Activated CD4-positive, alpha-beta T cell treated with anti-CD3 and anti-CD28 coated beads for 36 hours (primary cell): ENCODE measurements at regions of chr19 and their contacts with region 1.

Region 1: DNA sequence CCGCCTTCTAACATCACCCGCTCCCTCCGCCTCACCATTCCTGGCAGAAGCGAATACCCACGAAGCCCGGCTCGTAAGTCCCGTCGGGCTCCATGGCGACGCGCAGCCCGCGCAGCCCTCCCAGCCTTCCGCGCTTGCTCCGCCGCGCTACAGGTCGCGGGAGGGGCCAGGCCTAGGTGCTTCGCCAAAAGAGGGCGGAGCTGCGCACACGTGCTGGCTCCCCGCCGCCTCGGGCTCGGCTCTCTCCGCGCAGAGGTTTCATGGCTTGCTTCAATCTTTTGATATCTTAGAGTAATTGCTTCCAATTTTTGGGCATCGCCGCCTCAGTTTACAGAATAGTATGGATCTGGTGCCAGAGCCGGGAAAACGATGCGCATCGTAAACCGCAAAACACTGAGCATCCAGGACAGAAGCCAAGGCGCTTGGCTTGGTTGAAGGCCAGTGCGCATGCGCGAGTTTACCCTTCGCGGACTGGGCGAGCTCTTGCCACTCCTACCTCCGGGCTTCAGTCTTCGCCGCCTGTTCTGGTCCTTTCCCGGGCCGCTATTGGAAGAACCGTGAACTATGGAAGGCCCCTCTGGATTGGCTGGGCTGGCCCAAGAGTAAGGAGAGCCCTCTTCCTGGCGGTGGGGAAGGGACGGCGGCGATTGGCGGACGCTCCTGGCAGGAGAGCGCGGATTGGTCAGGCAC is at the start of gene POLR2I:
- DNase-seq: peak; percentile 99
- ATAC-seq: peak; percentile 95
- H3K4me3 Mint-ChIP-seq: peak within 1 kb of the TSS; percentile 98
- H3K27ac Mint-ChIP-seq: peak within 1 kb of the TSS; percentile 93
- H3K4me1 Mint-ChIP-seq: peaks cover 29% of the 10 kb centered on the region
- H3K27me3 Mint-ChIP-seq: no peaks in the 10 kb centered on the region
- total RNA-seq, gene POLR2I: 89.6 to 97.3 TPM

Region 2: DNA sequence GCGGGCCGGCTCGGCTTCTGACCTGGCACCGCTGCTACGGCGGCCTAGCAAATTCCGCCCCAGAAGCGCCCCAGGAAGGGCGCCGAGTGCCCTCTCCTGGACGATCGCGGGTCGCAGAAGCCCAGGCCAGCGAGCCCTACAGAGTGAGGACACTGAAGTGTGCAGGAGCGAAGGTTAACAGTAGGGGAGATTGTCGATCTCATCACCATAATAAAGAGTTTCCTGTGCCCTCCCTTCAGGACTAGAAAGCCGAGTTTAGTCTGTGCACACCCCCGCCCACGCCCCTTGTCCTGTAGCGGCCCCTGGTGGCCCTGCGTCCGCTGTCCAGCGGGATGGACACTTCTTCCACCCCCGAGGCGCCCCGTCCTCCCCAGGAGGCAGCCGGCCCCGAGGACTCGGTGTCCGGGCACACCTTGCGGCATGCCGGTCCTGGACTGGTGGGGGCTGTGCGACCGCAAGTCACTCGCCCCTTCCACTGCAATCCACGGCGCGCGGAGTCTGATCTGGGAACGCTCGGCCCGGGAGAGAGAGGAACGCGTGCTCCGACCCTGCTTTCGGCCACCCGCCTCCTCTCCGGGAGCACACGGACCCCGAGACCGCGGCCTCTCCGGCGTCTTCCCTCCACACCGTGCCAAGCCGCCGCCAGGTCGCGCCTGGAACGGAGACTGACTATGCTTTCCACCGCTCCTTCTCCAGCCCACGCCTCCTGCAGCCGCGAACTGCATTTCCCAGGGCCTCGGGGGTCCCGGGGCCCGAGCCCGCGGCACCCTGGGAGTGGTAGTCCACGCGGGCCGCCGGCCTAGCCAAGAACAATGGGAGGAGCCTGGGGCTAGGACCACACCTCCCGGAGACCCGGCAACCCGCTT is 397.9 kb before region 1 on chr19:
- CTCF ChIA-PET with region 1: no interaction called
- POLR2A ChIA-PET with region 1: no interaction called
- intact Hi-C with region 1: loop called (anchors 1 to 10 kb)
- DNase-seq: peak; percentile 98
- ATAC-seq: peak; percentile 61
- H3K4me3 Mint-ChIP-seq: peak overlapping the region; percentile 97
- H3K27ac Mint-ChIP-seq: peak overlapping the region; percentile 90
- H3K4me1 Mint-ChIP-seq: peaks cover 41% of the 10 kb centered on the region
- H3K27me3 Mint-ChIP-seq: no peaks in the 10 kb centered on the region

Region 3: DNA sequence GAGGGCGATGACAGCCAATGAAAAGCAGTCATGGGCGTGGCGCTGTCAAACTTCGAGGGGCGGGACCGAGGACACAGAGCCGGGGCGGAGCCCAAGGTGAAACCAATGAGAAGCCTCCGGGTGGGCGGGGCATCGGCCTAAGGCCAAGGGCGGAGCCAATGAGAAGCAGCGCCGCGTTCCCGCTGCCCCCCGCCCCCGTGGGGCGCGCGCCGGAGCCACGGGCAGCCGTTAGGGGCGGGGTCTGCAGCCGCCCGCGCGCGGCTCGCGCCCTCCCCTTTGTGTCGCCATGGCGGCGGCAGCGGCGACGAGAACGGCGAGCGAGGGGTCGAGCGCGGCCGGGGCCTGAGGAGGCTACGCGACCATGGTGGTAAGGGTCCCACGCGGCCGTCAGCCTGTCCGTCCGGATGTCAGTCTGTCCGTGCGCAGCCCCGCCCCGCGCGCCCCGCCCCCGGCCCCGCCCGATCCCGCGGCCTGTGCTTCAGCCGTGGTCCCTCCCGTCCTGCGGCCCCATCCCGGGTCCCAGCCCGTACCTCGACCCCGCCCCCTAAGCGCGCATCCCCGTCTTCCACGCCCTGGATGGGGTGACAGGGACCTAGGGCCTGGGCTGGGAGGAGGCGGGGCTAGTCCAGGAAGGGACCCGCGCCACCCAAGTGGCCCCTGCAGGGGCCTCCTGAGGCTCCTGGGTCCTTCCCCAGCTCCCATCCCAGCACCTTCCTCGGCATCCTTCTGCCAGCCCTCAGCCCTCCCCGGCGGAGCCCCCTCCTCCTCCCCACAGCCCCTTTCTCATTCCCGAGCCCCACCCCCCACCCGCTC is 339.4 kb before region 1 on chr19 and contains the start of gene ARHGAP33:
- CTCF ChIA-PET with region 1: no interaction called
- POLR2A ChIA-PET with region 1: no interaction called
- intact Hi-C with region 1: loop called in 1 of 2 experiments (anchors 1 kb)
- DNase-seq: peak; percentile 100
- ATAC-seq: peak; percentile 98
- H3K4me3 Mint-ChIP-seq: peak within 1 kb of the TSS; percentile 75
- H3K27ac Mint-ChIP-seq: no peak within 1 kb of the TSS
- H3K4me1 Mint-ChIP-seq: peaks cover 12% of the 10 kb centered on the region
- H3K27me3 Mint-ChIP-seq: no peaks in the 10 kb centered on the region
- total RNA-seq, gene ARHGAP33: 27.8 to 35.2 TPM

Region 4: DNA sequence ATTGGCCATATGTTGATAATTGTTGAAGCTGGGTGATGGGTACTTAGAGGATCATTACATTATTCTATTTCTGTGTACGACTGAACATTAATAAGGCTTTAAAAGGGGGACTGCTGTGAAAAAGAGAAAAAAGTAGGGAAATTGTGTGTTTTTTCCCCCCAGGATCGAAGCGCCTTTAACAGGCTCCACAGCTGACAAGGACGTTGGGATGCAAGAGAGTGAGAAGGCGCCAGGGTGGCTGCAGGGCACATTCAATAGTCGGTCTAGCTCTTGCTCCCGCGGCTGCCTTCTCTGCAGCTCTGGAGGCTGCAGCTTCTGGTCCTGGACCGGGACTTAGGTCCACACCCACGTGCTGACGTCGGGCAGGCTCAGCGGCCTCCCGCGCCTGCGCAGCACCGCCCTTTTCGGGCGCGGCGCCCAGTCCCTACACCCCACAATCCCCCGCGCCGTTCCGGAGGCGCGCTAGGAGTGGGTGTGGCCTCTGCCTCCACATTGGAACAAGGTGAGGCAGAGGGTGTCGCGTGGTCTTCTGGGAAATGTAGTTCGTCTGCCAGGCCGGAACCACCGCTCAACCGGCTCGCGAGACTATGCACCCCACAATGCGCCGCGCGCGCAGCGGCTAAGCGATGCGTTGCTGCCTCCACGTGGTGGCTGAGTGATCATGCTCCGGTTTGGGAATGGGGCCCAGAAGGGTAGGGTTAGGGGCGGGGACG is 183.6 kb before region 1 on chr19:
- CTCF ChIA-PET with region 1: no interaction called
- POLR2A ChIA-PET with region 1: no interaction called
- intact Hi-C with region 1: loop called in 1 of 2 experiments (anchors 1 kb)
- DNase-seq: peak; percentile 100
- ATAC-seq: peak; percentile 96
- H3K4me3 Mint-ChIP-seq: peak overlapping the region; percentile 67
- H3K27ac Mint-ChIP-seq: peak overlapping the region; percentile 86
- H3K4me1 Mint-ChIP-seq: peaks cover 26% of the 10 kb centered on the region
- H3K27me3 Mint-ChIP-seq: no peaks in the 10 kb centered on the region

Region 5: GRCh38 chr19:36132489-36132891 is 17.6 kb after region 1 on chr19:
- CTCF ChIA-PET with region 1: interaction called, 8 read pairs
- POLR2A ChIA-PET with region 1: interaction called, 12 read pairs
- intact Hi-C with region 1: loop called (anchors 1 kb)
- DNase-seq: peak; percentile 74
- ATAC-seq: peak; percentile 77
- H3K4me3 Mint-ChIP-seq: no peak overlapping the region
- H3K27ac Mint-ChIP-seq: peak overlapping the region; percentile 80
- H3K4me1 Mint-ChIP-seq: peaks cover 33% of the 10 kb centered on the region
- H3K27me3 Mint-ChIP-seq: no peaks in the 10 kb centered on the region

Region 6: DNA sequence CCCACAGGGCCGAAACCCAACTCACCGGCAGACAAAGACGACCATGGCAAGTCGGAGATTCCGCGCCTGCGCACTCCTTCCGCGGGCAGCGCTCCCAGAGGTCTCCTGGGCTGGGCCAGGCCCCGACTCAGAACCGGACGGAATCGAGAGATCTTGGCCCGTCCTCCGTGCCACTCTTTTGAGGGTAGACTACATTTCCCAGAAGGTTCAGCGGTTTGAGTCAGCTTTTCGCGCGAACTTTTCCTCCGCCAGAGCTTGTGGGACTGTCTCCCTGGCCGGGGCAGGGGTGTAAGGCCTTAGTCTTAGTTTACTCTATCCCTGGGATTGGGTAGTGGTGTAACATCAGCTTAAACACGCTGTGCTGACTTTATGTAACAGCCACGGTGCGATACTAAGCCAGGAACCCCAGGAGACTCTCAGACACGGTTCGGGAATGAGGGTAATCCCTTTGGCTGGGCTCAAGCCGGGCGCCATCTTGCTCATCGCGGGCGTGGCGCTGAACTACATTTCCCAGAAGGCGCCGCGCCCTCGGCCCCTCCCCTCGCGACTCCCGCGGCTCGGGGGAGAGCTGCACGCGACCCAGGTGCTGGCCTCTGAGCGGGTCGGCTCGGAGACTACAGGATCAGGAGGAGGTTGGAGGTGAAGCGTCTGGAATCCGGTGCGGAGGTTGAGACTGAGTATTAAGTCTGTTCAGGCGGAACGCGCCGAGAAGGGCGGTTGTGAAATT is 413.4 kb after region 1 on chr19 and contains the start of gene ZNF260:
- CTCF ChIA-PET with region 1: no interaction called
- POLR2A ChIA-PET with region 1: no interaction called
- intact Hi-C with region 1: loop called in 1 of 2 experiments (anchors 1 kb)
- DNase-seq: peak; percentile 97
- ATAC-seq: peak; percentile 91
- H3K4me3 Mint-ChIP-seq: peak within 1 kb of the TSS; percentile 87
- H3K27ac Mint-ChIP-seq: peak within 1 kb of the TSS; percentile 96
- H3K4me1 Mint-ChIP-seq: peaks cover 14% of the 10 kb centered on the region
- H3K27me3 Mint-ChIP-seq: no peaks in the 10 kb centered on the region
- total RNA-seq, gene ZNF260: 5.7 to 8.2 TPM

Region 7: DNA sequence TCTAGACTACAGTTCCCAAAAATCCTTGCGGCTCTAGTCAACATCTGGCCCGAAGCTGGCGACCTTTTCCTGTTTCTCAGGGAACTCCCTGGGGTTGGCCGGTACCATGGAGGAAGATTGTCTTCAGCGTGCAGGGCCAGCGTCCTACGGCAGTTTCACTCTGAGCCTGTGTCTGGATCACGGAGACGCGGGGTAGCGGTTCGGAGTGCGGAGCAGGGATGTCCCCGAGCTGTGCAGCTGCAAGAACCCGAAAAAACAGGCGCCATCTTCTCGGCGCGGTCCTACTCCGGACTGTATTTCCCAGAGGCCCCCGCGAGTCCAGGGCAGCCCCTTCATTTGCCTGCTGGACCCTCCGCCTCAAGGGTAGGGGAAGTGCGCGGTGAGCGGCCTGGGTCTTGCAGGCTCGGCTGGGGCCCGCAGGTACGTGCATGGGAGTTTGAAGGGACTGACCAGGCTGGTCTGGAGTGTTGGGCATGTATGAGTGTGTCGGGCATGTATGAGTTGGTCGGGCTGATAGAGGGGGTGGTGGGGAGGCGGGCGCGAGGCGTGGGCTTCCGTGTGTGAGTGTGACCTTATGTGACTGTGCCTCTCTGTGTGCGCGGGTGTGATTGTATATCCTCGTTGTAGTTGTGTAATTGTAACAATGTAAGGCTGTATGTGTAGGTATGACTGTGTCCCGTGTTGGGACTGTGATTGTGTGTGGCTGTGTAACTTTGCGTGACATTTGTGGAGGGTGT is 1103.1 kb after region 1 on chr19 and contains the start of gene ZNF383:
- CTCF ChIA-PET with region 1: no interaction called
- POLR2A ChIA-PET with region 1: no interaction called
- intact Hi-C with region 1: loop called in 1 of 2 experiments (anchors 5 kb)
- DNase-seq: peak; percentile 89
- ATAC-seq: peak; percentile 87
- H3K4me3 Mint-ChIP-seq: peak within 1 kb of the TSS; percentile 93
- H3K27ac Mint-ChIP-seq: peak within 1 kb of the TSS; percentile 99
- H3K4me1 Mint-ChIP-seq: peaks cover 24% of the 10 kb centered on the region
- H3K27me3 Mint-ChIP-seq: no peaks in the 10 kb centered on the region
- total RNA-seq, gene ZNF383: 8.5 to 9.2 TPM